ENCODE measurements at regions of chr13 and their contacts with region 1.

Region 1: GRCh38 chr13:75175575-75175974 is 306.4 kb downstream of the TBC1D4 start:
- DNase-seq: no peak
- H3K4me3 ChIP-seq: no peak overlapping the region
- H3K27ac ChIP-seq: no peak overlapping the region
- H3K4me1 ChIP-seq: no peaks in the 10 kb centered on the region
- H3K27me3 ChIP-seq: no peaks in the 10 kb centered on the region
- CTCF ChIP-seq: no peak
- EP300 ChIP-seq: no peak
- POLR2A ChIP-seq: no peak

Region 2: GRCh38 chr13:74669149-74669548 is 506.4 kb before region 1 on chr13:
- in situ Hi-C with region 1: no loop called
- intact Hi-C with region 1: no loop called
- DNase-seq: no peak
- H3K4me3 ChIP-seq: no peak overlapping the region
- H3K27ac ChIP-seq: no peak overlapping the region
- H3K4me1 ChIP-seq: no peaks in the 10 kb centered on the region
- H3K27me3 ChIP-seq: no peaks in the 10 kb centered on the region
- CTCF ChIP-seq: no peak
- EP300 ChIP-seq: no peak
- POLR2A ChIP-seq: no peak

Region 3: DNA sequence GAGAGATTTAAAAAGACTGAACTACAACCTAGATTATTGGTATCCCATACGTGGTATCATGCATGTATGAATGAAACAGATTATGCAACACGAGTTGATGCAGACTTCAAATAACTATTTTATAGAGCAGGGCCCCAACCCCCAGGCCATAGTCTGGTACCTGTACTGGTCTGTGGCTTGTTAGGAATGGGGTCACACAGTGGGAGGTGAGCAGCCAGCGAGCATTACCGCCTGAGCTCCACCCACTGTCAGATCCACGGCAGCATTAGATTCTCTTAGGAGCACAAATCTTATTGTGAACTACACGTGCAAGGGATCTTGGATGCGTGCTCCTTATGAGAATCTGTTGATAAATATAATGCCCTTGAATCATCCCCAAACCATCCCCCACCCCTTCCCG is 13.8 kb before region 1 on chr13:
- in situ Hi-C with region 1: no loop called
- intact Hi-C with region 1: no loop called
- DNase-seq: no peak
- H3K4me3 ChIP-seq: no peak overlapping the region
- H3K27ac ChIP-seq: no peak overlapping the region
- H3K4me1 ChIP-seq: no peaks in the 10 kb centered on the region
- H3K27me3 ChIP-seq: no peaks in the 10 kb centered on the region
- CTCF ChIP-seq: no peak
- EP300 ChIP-seq: no peak
- POLR2A ChIP-seq: no peak

Region 4: GRCh38 chr13:75687150-75687763 is 511.7 kb after region 1 on chr13:
- in situ Hi-C with region 1: no loop called
- intact Hi-C with region 1: no loop called
- DNase-seq: no peak
- H3K4me3 ChIP-seq: no peak overlapping the region
- H3K27ac ChIP-seq: no peak overlapping the region
- H3K4me1 ChIP-seq: no peaks in the 10 kb centered on the region
- H3K27me3 ChIP-seq: no peaks in the 10 kb centered on the region
- CTCF ChIP-seq: peak; percentile 28 to 51 (median 45)
- EP300 ChIP-seq: no peak
- POLR2A ChIP-seq: no peak

Region 5: GRCh38 chr13:76533251-76533650 is 1357.7 kb after region 1 on chr13:
- in situ Hi-C with region 1: no loop called
- intact Hi-C with region 1: loop called (anchors 5 kb)
- DNase-seq: no peak
- H3K4me3 ChIP-seq: no peak overlapping the region
- H3K27ac ChIP-seq: no peak overlapping the region
- H3K4me1 ChIP-seq: no peaks in the 10 kb centered on the region
- H3K27me3 ChIP-seq: no peaks in the 10 kb centered on the region
- CTCF ChIP-seq: no peak
- EP300 ChIP-seq: no peak
- POLR2A ChIP-seq: no peak